ENCODE measurements at regions of chr12 and their contacts with region 1.

Region 1: GRCh38 chr12:15700595-15700994 is 88.6 kb downstream of the EPS8 start:
- DNase-seq: peak; percentile 81 to 95 (median 94)
- H3K4me3 ChIP-seq: peak overlapping the region in 1 of 3 experiments; percentile 8
- H3K4me3 Mint-ChIP-seq: peak overlapping the region in 1 of 2 donors; percentile 32
- H3K27ac ChIP-seq: peak overlapping the region in 1 of 2 donors; percentile 83
- H3K27ac Mint-ChIP-seq: peak overlapping the region; percentile 79 to 95 (median 91)
- H3K4me1 ChIP-seq: peaks cover 50 to 58% of the 10 kb centered on the region in 2 donors
- H3K4me1 Mint-ChIP-seq: peaks cover 53% of the 10 kb centered on the region
- H3K27me3 ChIP-seq: no peaks in the 10 kb centered on the region
- H3K27me3 Mint-ChIP-seq: peaks cover 0 to 3% (median 0%) of the 10 kb centered on the region in 3 donors
- CTCF ChIP-seq: no peak

Region 2: DNA sequence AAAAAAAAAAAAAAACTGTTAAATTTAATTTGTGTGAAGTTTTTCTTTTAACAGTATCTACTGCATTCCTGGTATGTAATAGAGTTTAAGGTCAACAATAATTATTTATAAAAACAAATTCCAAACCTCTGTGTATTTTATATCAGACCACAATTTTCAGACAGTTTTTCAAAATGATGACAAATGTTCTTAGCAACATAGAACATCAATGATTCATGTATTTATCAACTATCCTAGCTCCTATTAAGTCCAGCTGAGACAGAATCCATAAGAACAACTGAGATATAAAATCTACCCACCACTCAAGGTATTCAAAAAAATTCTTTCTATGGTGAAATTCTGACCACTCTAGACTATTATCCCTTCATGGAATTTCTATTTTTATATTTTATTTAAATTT is 55.9 kb before region 1 on chr12:
- intact Hi-C with region 1: no loop called
- DNase-seq: no peak
- H3K4me3 ChIP-seq: no peak overlapping the region
- H3K4me3 Mint-ChIP-seq: no peak overlapping the region
- H3K27ac ChIP-seq: no peak overlapping the region
- H3K27ac Mint-ChIP-seq: no peak overlapping the region
- H3K4me1 ChIP-seq: no peaks in the 10 kb centered on the region
- H3K4me1 Mint-ChIP-seq: no peaks in the 10 kb centered on the region
- H3K27me3 ChIP-seq: no peaks in the 10 kb centered on the region
- H3K27me3 Mint-ChIP-seq: peaks cover 0 to 3% (median 2%) of the 10 kb centered on the region in 3 donors
- CTCF ChIP-seq: no peak

Region 3: DNA sequence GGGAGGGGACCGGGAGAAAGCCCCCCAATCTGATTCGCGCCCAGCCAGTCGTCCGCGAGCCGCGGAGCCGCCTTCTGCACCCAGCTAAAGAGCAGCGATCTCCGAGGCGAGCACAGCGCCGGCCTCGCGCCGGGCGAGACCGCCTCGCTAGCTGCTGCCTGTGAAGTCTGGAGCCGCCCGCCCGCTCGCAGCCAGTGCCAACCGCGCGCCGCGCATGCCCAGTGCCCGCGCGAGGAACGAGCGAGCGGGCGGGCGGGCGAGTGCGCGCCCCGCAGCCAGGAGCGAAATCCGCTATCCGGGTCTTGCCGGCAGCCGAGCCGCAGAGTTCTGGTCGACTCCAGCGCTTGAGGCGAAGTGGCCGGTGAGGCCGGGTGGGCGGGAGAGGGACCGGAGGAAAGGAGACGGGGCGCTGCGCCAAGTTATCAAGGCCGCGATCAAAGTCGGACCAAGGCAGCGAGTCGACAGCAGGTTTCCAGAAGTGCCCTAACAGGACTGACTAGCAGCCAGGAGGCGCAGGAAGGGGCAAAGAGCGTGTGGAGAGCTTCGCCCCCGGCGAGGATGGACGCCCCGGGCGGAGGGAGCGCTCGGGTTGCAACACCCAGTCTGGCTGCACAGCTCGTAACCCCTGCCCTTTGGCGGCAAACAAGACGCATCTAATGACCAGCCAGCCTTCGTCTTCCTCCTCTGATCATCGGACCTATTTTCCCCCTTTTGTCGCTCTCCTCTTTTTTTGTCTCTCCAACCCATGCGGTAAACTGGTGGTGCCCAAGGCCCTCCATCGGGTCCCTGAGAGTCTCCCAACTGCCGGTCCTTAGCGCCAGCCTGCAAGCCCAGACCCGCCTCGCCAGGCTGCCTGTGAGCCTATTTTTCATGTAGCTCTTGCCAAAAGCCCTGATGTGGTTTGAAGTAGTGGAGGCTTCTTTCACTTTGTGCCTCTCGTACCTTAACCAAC is 88.9 kb after region 1 on chr12 and contains the start of gene EPS8:
- intact Hi-C with region 1: loop called in 1 of 2 experiments (anchors 10 kb)
- DNase-seq: peak; percentile 84 to 89 (median 87)
- H3K4me3 ChIP-seq: peak within 1 kb of the TSS; percentile 64 to 89 (median 76)
- H3K4me3 Mint-ChIP-seq: peak within 1 kb of the TSS; percentile 97 to 98
- H3K27ac ChIP-seq: peak within 1 kb of the TSS; percentile 8 to 62
- H3K27ac Mint-ChIP-seq: peak within 1 kb of the TSS in 5 of 7 donors; percentile 1 to 88 (median 63)
- H3K4me1 ChIP-seq: peaks cover 14 to 24% of the 10 kb centered on the region in 2 donors
- H3K4me1 Mint-ChIP-seq: peaks cover 15% of the 10 kb centered on the region
- H3K27me3 ChIP-seq: peaks cover 35 to 39% of the 10 kb centered on the region in 2 donors
- H3K27me3 Mint-ChIP-seq: peaks cover 34 to 51% (median 45%) of the 10 kb centered on the region in 3 donors
- CTCF ChIP-seq: no peak
- polyA plus RNA-seq, gene EPS8: 4.1 to 4.8 (median 4.3) TPM

Measured in CD14-positive monocyte (primary cell).